HCT116 (cell line): ENCODE measurements at regions of chr2 and their contacts with region 1.

Region 1: DNA sequence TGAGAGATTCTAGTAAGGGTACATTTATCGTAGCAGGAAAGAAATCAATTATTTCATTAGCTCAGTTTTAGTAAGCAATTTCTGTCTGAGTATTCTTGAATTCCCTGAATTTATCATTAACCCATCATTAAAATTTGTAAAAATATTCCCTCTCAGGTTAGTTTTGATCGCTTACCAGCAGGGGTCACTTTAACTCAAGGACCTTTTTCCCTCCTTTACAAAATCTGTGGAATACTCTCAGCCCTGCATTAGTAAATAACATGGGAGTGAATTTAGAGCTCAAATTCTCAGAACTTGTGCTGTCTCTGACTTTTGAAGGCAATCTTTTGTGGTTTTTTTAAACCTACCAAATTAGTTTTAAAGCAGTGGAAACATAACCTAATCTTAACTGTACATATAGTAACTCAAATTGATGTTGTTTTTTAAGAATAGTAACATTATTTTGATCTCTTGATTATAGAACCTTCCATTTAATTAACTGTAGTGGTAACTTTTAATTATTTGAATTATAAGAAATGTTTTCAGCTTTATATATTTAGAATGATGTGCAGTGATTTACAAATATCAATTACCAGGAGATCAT is 97.2 kb downstream of the AGPS start:
- DNase-seq: peak; percentile 8
- ATAC-seq: peak; percentile 59; the same call in 1 of the 2 replicates
- H3K4me3 ChIP-seq: no peak overlapping the region
- H3K27ac ChIP-seq: no peak overlapping the region
- H3K4me1 ChIP-seq: no peaks in the 10 kb centered on the region
- H3K27me3 ChIP-seq: no peaks in the 10 kb centered on the region
- CTCF ChIP-seq: peak; percentile 51 to 74 (median 63); a peak in 5 of 6 replicates
- POLR2A ChIP-seq: no peak
- RAD21 ChIP-seq: peak; percentile 62

Region 2: GRCh38 chr2:176709149-176709951 is 780.5 kb before region 1 on chr2:
- CTCF ChIA-PET with region 1: no interaction called
- POLR2A ChIA-PET with region 1: no interaction called
- RAD21 ChIA-PET with region 1: no interaction called
- intact Hi-C with region 1: no loop called
- DNase-seq: no peak
- ATAC-seq: no peak
- H3K4me3 ChIP-seq: no peak overlapping the region
- H3K27ac ChIP-seq: no peak overlapping the region
- H3K4me1 ChIP-seq: no peaks in the 10 kb centered on the region
- H3K27me3 ChIP-seq: peaks cover 53% of the 10 kb centered on the region
- CTCF ChIP-seq: no peak
- POLR2A ChIP-seq: no peak
- RAD21 ChIP-seq: no peak

Region 3: GRCh38 chr2:177501186-177501585 is 11.4 kb after region 1 on chr2:
- CTCF ChIA-PET with region 1: interaction called, 11 read pairs
- POLR2A ChIA-PET with region 1: no interaction called
- RAD21 ChIA-PET with region 1: no interaction called
- intact Hi-C with region 1: no loop called
- DNase-seq: no peak
- ATAC-seq: no peak
- H3K4me3 ChIP-seq: no peak overlapping the region
- H3K27ac ChIP-seq: no peak overlapping the region
- H3K4me1 ChIP-seq: no peaks in the 10 kb centered on the region
- H3K27me3 ChIP-seq: no peaks in the 10 kb centered on the region
- CTCF ChIP-seq: no peak
- POLR2A ChIP-seq: no peak
- RAD21 ChIP-seq: no peak

Region 4: GRCh38 chr2:177604271-177605065 is 114.7 kb after region 1 on chr2:
- CTCF ChIA-PET with region 1: interaction called, 7 read pairs
- POLR2A ChIA-PET with region 1: no interaction called
- RAD21 ChIA-PET with region 1: interaction called in 1 of 2 experiments, 3 read pairs
- intact Hi-C with region 1: loop called (anchors 1 kb)
- DNase-seq: peak; percentile 53
- ATAC-seq: peak; percentile 82
- H3K4me3 ChIP-seq: no peak overlapping the region
- H3K27ac ChIP-seq: no peak overlapping the region
- H3K4me1 ChIP-seq: no peaks in the 10 kb centered on the region
- H3K27me3 ChIP-seq: no peaks in the 10 kb centered on the region
- CTCF ChIP-seq: peak; percentile 70 to 85 (median 77); a peak in 5 of 6 replicates
- POLR2A ChIP-seq: no peak
- RAD21 ChIP-seq: peak; percentile 64

Region 5: DNA sequence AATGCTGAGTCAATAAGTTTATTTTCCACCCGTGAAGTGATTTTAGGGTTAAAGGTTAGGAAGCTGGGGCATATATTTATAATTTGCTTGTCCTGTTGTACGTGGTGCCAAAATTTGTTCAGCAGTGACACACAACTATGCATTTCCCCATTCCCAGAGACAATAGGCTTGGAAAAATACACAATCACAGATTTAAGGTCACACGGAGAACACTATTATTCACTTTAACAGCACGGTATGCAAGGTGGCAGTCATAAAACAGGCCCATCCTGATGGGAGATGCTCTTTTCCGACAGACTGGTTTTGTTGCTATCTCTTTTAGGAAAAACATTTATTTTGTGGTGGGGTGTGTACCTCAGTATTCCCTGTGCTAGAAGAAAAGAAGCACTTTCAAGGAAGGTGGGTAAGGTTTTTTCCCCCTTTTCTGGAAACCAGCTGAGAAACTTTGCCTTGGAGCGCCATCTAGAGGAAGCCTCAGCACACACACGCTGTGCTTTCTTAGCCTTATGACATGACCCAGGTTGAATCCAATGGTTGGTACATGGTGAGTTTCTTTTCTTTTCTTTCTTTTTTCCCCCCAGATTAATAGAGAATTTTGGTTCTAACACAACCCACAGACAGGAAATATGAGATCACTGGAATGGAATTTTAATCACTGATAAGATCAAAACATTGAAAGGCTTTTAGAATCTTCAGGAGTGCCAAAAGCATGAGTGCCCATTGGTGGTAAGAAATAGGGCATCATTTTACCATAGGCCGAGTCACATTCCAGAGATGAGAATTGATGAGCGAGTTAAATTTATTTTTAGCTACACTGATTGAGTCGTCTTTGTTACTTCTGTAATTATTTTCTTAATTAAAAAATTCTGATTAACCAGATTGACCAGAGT is 234.8 kb after region 1 on chr2:
- CTCF ChIA-PET with region 1: interaction called, 4 read pairs
- POLR2A ChIA-PET with region 1: no interaction called
- RAD21 ChIA-PET with region 1: no interaction called
- intact Hi-C with region 1: loop called (anchors 1 kb)
- DNase-seq: peak; percentile 27
- ATAC-seq: peak; percentile 95
- H3K4me3 ChIP-seq: no peak overlapping the region
- H3K27ac ChIP-seq: no peak overlapping the region
- H3K4me1 ChIP-seq: no peaks in the 10 kb centered on the region
- H3K27me3 ChIP-seq: no peaks in the 10 kb centered on the region
- CTCF ChIP-seq: peak; percentile 79 to 97 (median 93); a peak in 5 of 6 replicates
- POLR2A ChIP-seq: no peak
- RAD21 ChIP-seq: peak; percentile 86